ENCODE measurements at regions of chr1 and their contacts with region 1.

Region 1: GRCh38 chr1:45583264-45583665 is 576 bp upstream of the NASP start:
- DNase-seq: peak; percentile 93
- H3K4me3 Mint-ChIP-seq: peak overlapping the region; percentile 100
- H3K27ac Mint-ChIP-seq: peak overlapping the region; percentile 98
- H3K4me1 Mint-ChIP-seq: peaks cover 29% of the 10 kb centered on the region
- H3K27me3 Mint-ChIP-seq: no peaks in the 10 kb centered on the region

Region 2: GRCh38 chr1:44799770-44800584 is 783.3 kb before region 1 on chr1 and contains the start of gene PLK3:
- intact Hi-C with region 1: loop called (anchors 10 kb)
- DNase-seq: peak; percentile 97
- H3K4me3 Mint-ChIP-seq: peak within 1 kb of the TSS; percentile 97
- H3K27ac Mint-ChIP-seq: peak within 1 kb of the TSS; percentile 99
- H3K4me1 Mint-ChIP-seq: peaks cover 35% of the 10 kb centered on the region
- H3K27me3 Mint-ChIP-seq: no peaks in the 10 kb centered on the region
- total RNA-seq, gene PLK3: 208 and 211 TPM in 2 replicates

Region 3: GRCh38 chr1:45339789-45340570 is 243.3 kb before region 1 on chr1 and contains the starts of genes MUTYH and TOE1:
- intact Hi-C with region 1: loop called (anchors 1 kb)
- DNase-seq: peak; percentile 94
- H3K4me3 Mint-ChIP-seq: peak within 1 kb of the TSS; percentile 99
- H3K27ac Mint-ChIP-seq: peak within 1 kb of the TSS; percentile 100
- H3K4me1 Mint-ChIP-seq: peaks cover 39% of the 10 kb centered on the region
- H3K27me3 Mint-ChIP-seq: no peaks in the 10 kb centered on the region
- total RNA-seq, gene MUTYH: 53.4 and 55.9 TPM in 2 replicates
- total RNA-seq, gene TOE1: 39.1 and 41.4 TPM in 2 replicates

Region 4: GRCh38 chr1:45512641-45513054 is 70.6 kb before region 1 on chr1:
- intact Hi-C with region 1: loop called (anchors 1 kb)
- DNase-seq: peak; percentile 43
- H3K4me3 Mint-ChIP-seq: no peak overlapping the region
- H3K27ac Mint-ChIP-seq: peak overlapping the region; percentile 55
- H3K4me1 Mint-ChIP-seq: peaks cover 39% of the 10 kb centered on the region
- H3K27me3 Mint-ChIP-seq: no peaks in the 10 kb centered on the region

Region 5: DNA sequence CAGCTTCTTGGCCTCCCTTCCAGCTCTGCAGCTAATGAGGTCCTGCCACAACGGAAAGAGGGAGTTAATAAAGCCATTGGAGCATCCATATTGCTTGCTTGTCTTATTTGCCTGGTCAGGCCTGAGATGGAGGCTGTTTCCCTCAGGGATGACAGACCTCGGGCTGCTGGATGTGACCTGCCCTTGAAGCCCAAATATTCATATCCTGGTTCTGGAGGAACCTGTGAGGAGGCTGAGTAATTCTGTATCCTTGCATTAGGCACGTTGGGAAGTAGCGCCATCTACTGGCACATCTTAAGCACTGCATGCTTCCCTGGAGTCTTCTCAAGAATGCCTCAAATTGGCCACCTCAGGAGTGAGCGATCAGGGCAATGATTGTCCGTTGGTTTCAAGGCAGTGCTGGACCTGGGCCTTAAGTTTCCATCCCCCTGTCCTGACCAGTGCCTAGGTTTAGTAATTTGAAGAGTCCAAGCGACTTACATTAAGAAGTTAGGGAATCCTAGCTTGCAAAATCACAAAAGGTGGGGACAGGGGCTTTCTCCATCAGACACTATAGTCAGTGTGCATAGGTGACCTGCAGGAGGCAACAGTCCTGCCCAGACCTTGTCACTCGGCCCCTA is 13.2 kb before region 1 on chr1:
- intact Hi-C with region 1: loop called (anchors 1 kb)
- DNase-seq: peak; percentile 57
- H3K4me3 Mint-ChIP-seq: no peak overlapping the region
- H3K27ac Mint-ChIP-seq: no peak overlapping the region
- H3K4me1 Mint-ChIP-seq: peaks cover 9% of the 10 kb centered on the region
- H3K27me3 Mint-ChIP-seq: no peaks in the 10 kb centered on the region

Region 6: DNA sequence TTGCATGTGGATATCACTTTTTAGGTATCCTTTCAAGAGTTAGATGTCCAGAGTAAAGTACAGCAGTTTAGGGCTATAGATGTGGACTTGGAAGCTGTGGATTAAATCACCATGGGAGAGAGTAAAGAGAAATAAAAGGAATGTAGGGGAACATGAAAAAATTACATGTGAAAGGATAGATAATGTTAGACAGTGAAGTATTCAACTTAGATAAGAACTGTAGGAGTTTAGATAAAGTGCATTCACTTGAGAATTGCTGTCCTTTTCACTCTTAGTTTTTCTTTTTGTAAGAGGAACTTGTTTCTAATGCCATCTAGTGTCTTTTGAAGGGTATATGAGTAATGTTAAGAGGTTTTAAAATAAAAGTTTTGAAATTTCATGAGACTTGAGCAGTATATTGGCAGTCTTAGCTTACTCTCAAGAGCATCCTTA is 260.2 kb after region 1 on chr1:
- intact Hi-C with region 1: loop called (anchors 5 kb)
- DNase-seq: no peak
- H3K4me3 Mint-ChIP-seq: peak overlapping the region; percentile 1
- H3K27ac Mint-ChIP-seq: peak overlapping the region; percentile 70
- H3K4me1 Mint-ChIP-seq: peaks cover 14% of the 10 kb centered on the region
- H3K27me3 Mint-ChIP-seq: no peaks in the 10 kb centered on the region

Region 7: GRCh38 chr1:46340404-46341221 is 757.3 kb after region 1 on chr1 and contains the start of gene NSUN4:
- intact Hi-C with region 1: loop called (anchors 1 kb)
- DNase-seq: peak; percentile 83
- H3K4me3 Mint-ChIP-seq: peak within 1 kb of the TSS; percentile 100
- H3K27ac Mint-ChIP-seq: peak within 1 kb of the TSS; percentile 100
- H3K4me1 Mint-ChIP-seq: peaks cover 39% of the 10 kb centered on the region
- H3K27me3 Mint-ChIP-seq: no peaks in the 10 kb centered on the region
- total RNA-seq, gene NSUN4: 37.6 and 39.6 TPM in 2 replicates